GM12878 (cell line): ENCODE measurements at regions of chr1 and their contacts with region 1.

Region 1: GRCh38 chr1:151853411-151853943 is at the start of gene THEM5:
- DNase-seq: no peak
- ATAC-seq: peak; percentile 36; the same call in 1 of the 3 replicates
- H3K4me3 ChIP-seq: no peak within 1 kb of the TSS
- H3K27ac ChIP-seq: no peak within 1 kb of the TSS
- H3K4me1 ChIP-seq: no peaks in the 10 kb centered on the region
- H3K27me3 ChIP-seq: peaks cover 0 to 3% of the 10 kb centered on the region in 2 experiments; a peak in 1 of 4 replicates
- CTCF ChIP-seq: no peak; a peak in 1 of 6 replicates
- EP300 ChIP-seq: no peak
- POLR2A ChIP-seq: no peak
- RAD21 ChIP-seq: peak; percentile 26; the same call in 1 of the 2 replicates
- polyA plus RNA-seq, gene THEM5: not detected

Region 2: GRCh38 chr1:151825741-151826660 is 27.5 kb before region 1 on chr1:
- CTCF ChIA-PET with region 1: no interaction called
- POLR2A ChIA-PET with region 1: interaction called, 3 read pairs
- RAD21 ChIA-PET with region 1: no interaction called
- SMC1A ChIA-PET with region 1: interaction called, 3 read pairs
- in situ Hi-C with region 1: no loop called
- intact Hi-C with region 1: loop called (anchors 2 kb)
- DNase-seq: no peak
- ATAC-seq: no peak
- H3K4me3 ChIP-seq: no peak overlapping the region
- H3K27ac ChIP-seq: no peak overlapping the region
- H3K4me1 ChIP-seq: peaks cover 10% of the 10 kb centered on the region
- H3K27me3 ChIP-seq: no peaks in the 10 kb centered on the region
- CTCF ChIP-seq: no peak
- EP300 ChIP-seq: no peak
- POLR2A ChIP-seq: no peak
- RAD21 ChIP-seq: no peak